ENCODE measurements at regions of chr20 and their contacts with region 1.

Region 1: DNA sequence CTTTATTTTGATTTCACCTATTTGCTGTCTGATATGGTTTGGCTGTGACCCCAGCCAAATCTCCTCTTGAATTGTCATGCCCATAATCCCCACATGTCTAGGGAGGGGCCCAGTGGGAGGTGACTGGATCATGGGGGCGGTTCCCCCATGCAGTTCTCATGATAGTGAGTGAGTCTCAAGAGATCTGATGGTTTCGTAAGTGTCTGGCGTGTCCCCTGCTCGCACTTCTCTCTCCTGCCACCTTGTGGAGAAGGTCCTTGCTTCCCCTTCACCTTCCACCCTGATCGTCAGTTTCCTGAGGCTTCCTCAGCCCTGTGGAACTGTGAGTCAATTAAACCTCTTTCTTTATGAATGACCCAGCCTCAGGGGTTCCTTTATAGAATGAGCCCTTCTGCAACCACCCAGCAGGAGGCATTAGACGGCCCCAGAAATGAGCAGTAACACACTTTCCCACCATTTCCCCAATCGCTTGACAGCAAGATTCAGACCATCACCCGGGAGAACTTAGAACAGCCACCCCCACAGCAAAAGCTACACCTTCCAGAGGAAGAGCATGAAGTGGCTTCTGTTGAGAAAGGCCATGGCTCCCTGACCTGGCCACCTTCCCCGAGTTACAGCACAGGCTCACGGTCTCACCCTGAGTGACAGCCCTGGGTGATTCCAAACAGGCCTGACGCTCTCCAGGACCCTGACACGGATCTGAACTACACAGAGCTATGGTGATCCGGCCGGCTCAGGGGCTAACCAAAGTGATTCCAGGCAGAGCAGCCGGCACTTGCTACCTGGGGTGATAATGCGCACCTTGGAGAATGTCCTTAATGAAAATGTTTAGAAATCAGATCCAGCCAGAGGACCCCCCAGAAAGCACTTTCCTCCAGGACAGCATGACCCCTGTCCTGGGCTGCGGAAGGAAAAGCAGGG is 131.2 kb upstream of the CDH4 start:
- DNase-seq: peak; percentile 66
- H3K4me3 Mint-ChIP-seq: no peak overlapping the region
- H3K27ac Mint-ChIP-seq: no peak overlapping the region
- H3K4me1 Mint-ChIP-seq: no peaks in the 10 kb centered on the region
- H3K27me3 Mint-ChIP-seq: peaks cover 12% of the 10 kb centered on the region
- CTCF ChIP-seq: peak; percentile 62

Region 2: DNA sequence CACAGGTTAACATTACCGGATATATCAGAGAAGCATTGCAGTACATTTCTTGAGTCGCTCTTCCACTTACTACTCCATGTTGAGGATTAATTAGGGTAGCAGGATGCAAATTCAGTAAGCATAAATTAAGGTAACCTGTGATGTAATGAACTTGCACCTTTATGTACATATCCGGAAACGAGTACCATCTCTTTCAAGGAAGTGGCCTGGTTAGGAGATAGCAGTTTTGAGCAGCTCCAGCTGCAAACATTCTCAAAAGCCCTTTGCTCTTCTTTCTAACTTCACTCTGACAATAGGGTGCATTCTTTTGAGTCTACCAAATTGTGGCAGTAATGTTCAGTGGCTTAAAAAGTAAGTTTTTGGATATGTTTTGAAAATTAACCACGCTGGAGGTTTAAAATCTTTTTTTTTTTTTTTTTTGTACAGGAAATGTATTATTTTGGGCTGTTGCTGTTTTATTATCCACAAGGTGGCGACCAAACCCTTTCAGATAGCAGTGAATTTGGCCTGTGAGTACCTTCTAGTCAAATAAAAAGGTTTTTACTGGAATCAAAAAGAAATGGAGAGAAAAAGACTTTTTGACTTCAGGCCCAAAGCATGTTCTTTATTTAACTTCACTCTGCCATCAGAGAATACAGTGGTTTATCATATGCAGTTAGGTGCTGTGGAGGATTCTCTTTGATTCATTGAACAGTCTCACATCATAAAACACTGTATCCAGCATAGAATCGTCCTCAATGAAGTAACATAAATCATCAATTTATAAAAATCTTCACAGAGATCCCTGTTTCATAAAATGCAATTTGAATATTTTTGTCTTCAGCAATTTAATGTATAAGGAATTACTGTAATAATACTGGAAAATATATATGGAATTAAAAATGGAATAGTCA is 1171.8 kb before region 1 on chr20:
- CTCF ChIA-PET with region 1: no interaction called
- intact Hi-C with region 1: loop called (anchors 1 kb)
- DNase-seq: peak; percentile 48
- H3K4me3 Mint-ChIP-seq: no peak overlapping the region
- H3K27ac Mint-ChIP-seq: no peak overlapping the region
- H3K4me1 Mint-ChIP-seq: peaks cover 14% of the 10 kb centered on the region
- H3K27me3 Mint-ChIP-seq: no peaks in the 10 kb centered on the region
- CTCF ChIP-seq: peak; percentile 57

Region 3: DNA sequence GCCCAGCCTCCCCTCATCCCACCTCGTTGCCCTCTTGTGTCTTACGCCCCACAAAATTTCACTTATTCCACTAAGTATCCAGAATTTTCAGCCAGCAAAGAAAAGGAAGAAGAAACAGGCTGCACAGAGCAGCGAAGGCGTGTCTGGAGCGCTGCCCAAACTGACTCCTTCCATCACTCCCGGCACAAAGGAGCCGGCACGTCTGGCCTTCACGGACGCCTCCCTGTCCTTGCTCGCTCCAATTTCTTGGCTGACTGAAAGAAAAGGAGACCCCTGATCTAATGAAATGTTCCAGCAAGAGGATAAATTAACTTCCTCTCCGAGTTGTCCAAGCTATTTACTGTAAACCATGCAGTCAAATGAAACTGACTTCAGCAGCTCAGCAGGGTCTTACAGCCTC is 21.0 kb before region 1 on chr20:
- CTCF ChIA-PET with region 1: no interaction called
- intact Hi-C with region 1: no loop called
- DNase-seq: no peak
- H3K4me3 Mint-ChIP-seq: no peak overlapping the region
- H3K27ac Mint-ChIP-seq: no peak overlapping the region
- H3K4me1 Mint-ChIP-seq: no peaks in the 10 kb centered on the region
- H3K27me3 Mint-ChIP-seq: peaks cover 27% of the 10 kb centered on the region
- CTCF ChIP-seq: no peak

Region 4: GRCh38 chr20:61192342-61192950 is 71.6 kb after region 1 on chr20:
- CTCF ChIA-PET with region 1: no interaction called
- intact Hi-C with region 1: no loop called
- DNase-seq: no peak
- H3K4me3 Mint-ChIP-seq: no peak overlapping the region
- H3K27ac Mint-ChIP-seq: no peak overlapping the region
- H3K4me1 Mint-ChIP-seq: no peaks in the 10 kb centered on the region
- H3K27me3 Mint-ChIP-seq: no peaks in the 10 kb centered on the region
- CTCF ChIP-seq: no peak

Region 5: GRCh38 chr20:61234803-61235113 is 113.9 kb after region 1 on chr20:
- CTCF ChIA-PET with region 1: no interaction called
- intact Hi-C with region 1: loop called (anchors 2 kb)
- DNase-seq: no peak
- H3K4me3 Mint-ChIP-seq: no peak overlapping the region
- H3K27ac Mint-ChIP-seq: no peak overlapping the region
- H3K4me1 Mint-ChIP-seq: no peaks in the 10 kb centered on the region
- H3K27me3 Mint-ChIP-seq: peaks cover 46% of the 10 kb centered on the region
- CTCF ChIP-seq: no peak

Measured in Calu3 (cell line).